Uterus (tissue), 4 donors: ENCODE measurements at regions of chr6 and their contacts with region 1.

Region 1: DNA sequence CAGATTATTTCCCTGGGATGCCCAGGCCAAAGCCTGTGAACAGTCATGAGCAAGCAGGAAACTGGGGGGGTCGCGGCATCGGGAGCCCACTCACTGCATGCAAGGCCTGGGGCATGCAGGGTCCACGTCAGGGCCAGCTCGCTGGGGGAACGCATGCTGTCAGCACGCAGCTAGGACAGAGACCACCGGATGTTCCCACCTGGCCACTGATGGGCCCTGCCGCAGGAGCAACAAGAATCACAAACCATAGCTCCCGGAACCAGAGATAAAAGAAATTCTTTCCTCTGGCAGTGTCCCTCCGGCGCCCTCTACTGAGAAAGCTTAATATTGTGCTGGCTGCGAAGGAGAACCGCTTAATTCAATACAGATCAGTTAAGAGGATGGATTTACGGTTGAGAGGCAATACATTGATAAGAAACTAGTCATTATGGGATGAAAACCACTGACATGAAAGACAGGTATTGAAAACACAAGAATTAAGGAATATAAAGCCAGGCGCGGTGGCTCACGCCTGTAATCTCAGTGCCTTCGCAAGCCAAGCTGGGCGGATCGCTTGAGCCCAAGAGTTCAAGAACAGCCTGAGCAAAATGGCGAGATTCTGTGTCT is 32.6 kb downstream of the C6orf15 start:
- DNase-seq: peak; percentile 65 to 68
- H3K4me3 ChIP-seq: peak overlapping the region in 1 of 2 donors; percentile 9
- H3K27ac ChIP-seq: peak overlapping the region in 1 of 2 donors; percentile 28
- H3K4me1 ChIP-seq: peaks cover 0 to 5% of the 10 kb centered on the region in 2 donors
- H3K27me3 ChIP-seq: no peaks in the 10 kb centered on the region
- CTCF ChIP-seq: peak; percentile 75 to 88 (median 77)
- POLR2A ChIP-seq: no peak

Region 2: DNA sequence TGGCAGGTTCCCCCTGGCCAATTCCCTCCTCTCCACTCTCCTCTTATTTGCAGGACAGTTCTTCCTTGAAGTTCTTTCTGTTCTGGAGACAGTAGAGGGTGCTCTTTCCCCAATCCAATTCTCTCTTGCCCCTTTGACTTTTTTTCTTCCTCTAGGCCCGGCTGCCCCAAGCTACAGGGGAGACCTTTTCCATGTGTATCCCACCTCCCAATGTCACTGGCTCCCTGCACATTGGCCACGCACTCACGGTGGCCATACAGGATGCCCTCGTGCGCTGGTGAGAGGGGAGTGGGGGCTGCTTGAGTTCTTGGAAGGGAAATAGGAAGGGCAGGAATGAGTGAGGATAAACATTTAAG is 164.2 kb before region 1 on chr6:
- intact Hi-C with region 1: loop called (anchors 5 kb)
- DNase-seq: peak in 1 of 2 donors; percentile 37
- H3K4me3 ChIP-seq: no peak overlapping the region
- H3K27ac ChIP-seq: peak overlapping the region; percentile 91 to 96
- H3K4me1 ChIP-seq: peaks cover 3 to 15% of the 10 kb centered on the region in 2 donors
- H3K27me3 ChIP-seq: no peaks in the 10 kb centered on the region
- CTCF ChIP-seq: peak; percentile 57 to 69 (median 65)
- POLR2A ChIP-seq: no peak

Region 3: GRCh38 chr6:31058128-31058894 is 21.4 kb before region 1 on chr6:
- intact Hi-C with region 1: no loop called
- DNase-seq: no peak
- H3K4me3 ChIP-seq: no peak overlapping the region
- H3K27ac ChIP-seq: no peak overlapping the region
- H3K4me1 ChIP-seq: no peaks in the 10 kb centered on the region
- H3K27me3 ChIP-seq: no peaks in the 10 kb centered on the region
- CTCF ChIP-seq: peak; percentile 9 to 42 (median 30)
- POLR2A ChIP-seq: no peak